ENCODE measurements at regions of chr11 and their contacts with region 1.

Region 1: DNA sequence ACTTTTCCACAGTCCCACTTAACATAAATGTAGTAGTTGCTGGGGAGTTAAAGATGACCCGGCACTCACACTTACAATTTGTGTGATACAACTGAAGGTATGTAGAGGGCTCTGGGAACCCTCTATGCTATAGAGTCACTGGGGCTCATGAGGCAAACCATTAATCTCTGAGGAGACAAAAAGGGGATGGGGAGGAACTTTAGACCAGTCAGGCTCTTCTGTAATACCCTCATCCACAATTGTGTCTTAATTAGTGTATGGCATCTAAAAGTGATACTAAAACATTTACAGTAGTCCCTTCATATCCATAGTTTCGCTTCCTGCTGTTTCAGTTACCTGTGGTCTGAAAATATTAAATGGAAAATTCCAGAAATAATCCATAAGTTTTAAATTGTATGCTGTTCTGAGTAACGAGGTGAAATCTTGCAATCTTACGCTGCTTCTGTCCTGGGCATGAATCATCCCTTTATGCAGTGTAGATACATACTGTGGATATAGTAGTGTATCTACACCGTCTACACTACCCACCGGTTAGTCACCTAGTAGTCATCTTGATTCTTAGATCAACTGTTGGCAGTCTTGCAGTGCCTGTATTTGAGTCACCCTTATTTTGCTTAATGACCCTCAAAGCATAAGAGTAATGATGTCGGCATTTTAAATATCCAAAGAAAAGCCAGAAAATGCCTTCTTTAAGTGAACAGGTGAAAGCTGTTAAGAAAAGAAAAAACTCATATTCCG is 12.2 kb downstream of the CBL start:
- H3K4me3 Mint-ChIP-seq: no peak overlapping the region
- H3K27ac Mint-ChIP-seq: no peak overlapping the region
- H3K4me1 Mint-ChIP-seq: peaks cover 35% of the 10 kb centered on the region
- H3K27me3 Mint-ChIP-seq: no peaks in the 10 kb centered on the region

Region 2: GRCh38 chr11:119166368-119167076 is 51.8 kb before region 1 on chr11:
- intact Hi-C with region 1: no loop called
- H3K4me3 Mint-ChIP-seq: no peak overlapping the region
- H3K27ac Mint-ChIP-seq: no peak overlapping the region
- H3K4me1 Mint-ChIP-seq: peaks cover 17% of the 10 kb centered on the region
- H3K27me3 Mint-ChIP-seq: no peaks in the 10 kb centered on the region

Region 3: DNA sequence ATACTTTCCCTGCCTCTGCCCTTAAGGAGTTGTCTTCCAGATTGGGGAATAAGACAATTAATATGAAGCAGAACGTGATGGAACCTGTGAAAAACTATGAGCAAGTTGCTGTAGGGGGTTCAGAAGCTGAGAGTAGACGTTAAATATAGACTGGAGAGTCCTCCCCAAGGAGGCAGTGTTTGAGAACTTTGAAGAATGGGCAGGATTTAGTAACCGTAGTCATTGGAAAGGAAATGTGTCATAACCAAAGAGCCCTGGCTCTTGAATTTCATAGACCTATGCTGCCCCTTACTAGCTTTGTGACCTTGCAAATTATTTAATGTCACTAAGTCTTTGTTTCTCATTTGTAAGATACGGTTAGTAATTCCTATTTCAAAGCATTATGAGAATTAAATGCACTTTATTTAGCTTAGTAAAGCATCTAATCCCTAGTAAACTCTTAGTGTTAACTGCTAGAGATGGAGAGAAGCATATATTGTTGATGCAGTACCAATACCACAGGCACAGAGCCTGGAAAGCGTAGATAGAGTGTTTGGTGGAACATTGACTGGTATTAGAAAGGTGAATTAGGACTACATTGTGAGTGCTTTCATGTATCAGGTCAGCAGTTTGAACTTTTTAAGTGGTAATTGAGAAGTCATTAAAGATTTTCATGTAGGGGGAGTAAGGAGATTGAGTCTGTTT is 44.5 kb after region 1 on chr11:
- intact Hi-C with region 1: loop called (anchors 10 kb)
- H3K4me3 Mint-ChIP-seq: no peak overlapping the region
- H3K27ac Mint-ChIP-seq: no peak overlapping the region
- H3K4me1 Mint-ChIP-seq: peaks cover 37% of the 10 kb centered on the region
- H3K27me3 Mint-ChIP-seq: no peaks in the 10 kb centered on the region

Region 4: GRCh38 chr11:119389611-119390254 is 171.4 kb after region 1 on chr11:
- intact Hi-C with region 1: no loop called
- H3K4me3 Mint-ChIP-seq: no peak overlapping the region
- H3K27ac Mint-ChIP-seq: no peak overlapping the region
- H3K4me1 Mint-ChIP-seq: no peaks in the 10 kb centered on the region
- H3K27me3 Mint-ChIP-seq: peaks cover 17% of the 10 kb centered on the region

Measured in dendritic cell treated with granulocyte-macrophage colony-stimulating factor and Interleukin-4, amounts not matched to agents 40 ng/mL and 50 ng/mL, for 4 days (primary cell).